K562 (cell line): ENCODE measurements at regions of chr6 and their contacts with region 1.

Region 1: DNA sequence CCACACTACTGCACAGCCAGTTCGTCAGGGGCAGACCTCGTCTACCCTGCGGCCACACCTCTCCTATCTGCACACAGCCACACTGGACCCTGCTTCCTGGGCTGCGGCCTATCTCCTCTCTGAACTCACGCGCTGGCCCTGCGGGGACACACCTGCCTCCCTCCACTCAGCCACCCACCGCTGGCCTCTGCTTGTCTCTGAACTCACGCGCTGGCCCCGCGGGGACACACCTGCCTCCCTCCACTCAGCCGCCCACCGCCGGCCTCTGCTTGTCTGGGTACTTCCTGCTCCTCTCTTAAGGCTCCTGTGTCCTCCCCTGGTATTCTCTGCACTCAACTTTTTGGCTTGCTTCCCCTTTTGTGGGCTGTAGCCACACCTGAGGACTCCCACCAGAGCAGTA is 52.3 kb downstream of the HUS1B start:
- DNase-seq: peak; percentile 64 to 91 (median 77)
- ATAC-seq: peak; percentile 98
- H3K4me3 ChIP-seq: no peak overlapping the region
- H3K27ac ChIP-seq: peak overlapping the region; percentile 14; the same call in 1 of the 3 replicates
- H3K4me1 ChIP-seq: peaks cover 15 to 27% of the 10 kb centered on the region in 2 experiments; a peak in 4 of 5 replicates
- H3K27me3 ChIP-seq: no peaks in the 10 kb centered on the region
- CTCF ChIP-seq: no peak
- EP300 ChIP-seq: peak; percentile 57; the same call in 1 of the 2 replicates
- POLR2A ChIP-seq: no peak
- RAD21 ChIP-seq: no peak

Region 2: GRCh38 chr6:328136-328670 is 276.4 kb before region 1 on chr6:
- CTCF ChIA-PET with region 1: no interaction called
- POLR2A ChIA-PET with region 1: no interaction called
- in situ Hi-C with region 1: no loop called
- intact Hi-C with region 1: no loop called
- DNase-seq: no peak
- ATAC-seq: peak; percentile 31; the same call in 1 of the 3 replicates
- H3K4me3 ChIP-seq: no peak overlapping the region
- H3K27ac ChIP-seq: no peak overlapping the region
- H3K4me1 ChIP-seq: peaks cover 4 to 5% of the 10 kb centered on the region in 2 experiments; a peak in 3 of 5 replicates
- H3K27me3 ChIP-seq: peaks cover 6 to 35% of the 10 kb centered on the region in 2 experiments; a peak in 3 of 5 replicates
- CTCF ChIP-seq: no peak
- EP300 ChIP-seq: no peak
- POLR2A ChIP-seq: no peak
- RAD21 ChIP-seq: no peak

Region 3: DNA sequence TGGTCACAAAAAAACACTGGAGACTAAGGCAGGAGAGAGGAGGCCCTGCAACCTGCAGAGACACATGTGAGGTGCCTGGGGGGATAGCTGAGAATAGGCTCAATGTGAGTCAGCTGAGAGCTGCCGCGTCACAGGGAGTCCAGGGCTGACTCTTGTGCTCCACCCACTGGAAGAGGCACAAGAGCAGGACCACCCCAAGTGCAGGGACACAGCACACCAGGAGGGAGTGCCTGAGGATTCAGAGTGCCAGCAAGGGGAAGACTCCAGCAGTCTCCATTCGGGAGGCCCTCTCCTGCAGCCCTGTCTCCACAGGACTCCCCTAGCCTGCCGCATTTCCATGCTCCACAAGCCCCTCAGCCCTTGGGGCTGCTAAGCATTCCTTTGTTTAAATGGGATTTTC is 53.2 kb before region 1 on chr6:
- CTCF ChIA-PET with region 1: no interaction called
- POLR2A ChIA-PET with region 1: no interaction called
- in situ Hi-C with region 1: no loop called
- intact Hi-C with region 1: no loop called
- DNase-seq: peak in 2 of 4 experiments; percentile 58 to 60
- ATAC-seq: peak; percentile 97
- H3K4me3 ChIP-seq: no peak overlapping the region
- H3K27ac ChIP-seq: no peak overlapping the region
- H3K4me1 ChIP-seq: no peaks in the 10 kb centered on the region; a peak in 1 of 5 replicates
- H3K27me3 ChIP-seq: no peaks in the 10 kb centered on the region
- CTCF ChIP-seq: peak; percentile 45 to 68 (median 56)
- EP300 ChIP-seq: no peak
- POLR2A ChIP-seq: no peak
- RAD21 ChIP-seq: peak; percentile 6 to 61; a peak in 2 of 4 replicates

Region 4: DNA sequence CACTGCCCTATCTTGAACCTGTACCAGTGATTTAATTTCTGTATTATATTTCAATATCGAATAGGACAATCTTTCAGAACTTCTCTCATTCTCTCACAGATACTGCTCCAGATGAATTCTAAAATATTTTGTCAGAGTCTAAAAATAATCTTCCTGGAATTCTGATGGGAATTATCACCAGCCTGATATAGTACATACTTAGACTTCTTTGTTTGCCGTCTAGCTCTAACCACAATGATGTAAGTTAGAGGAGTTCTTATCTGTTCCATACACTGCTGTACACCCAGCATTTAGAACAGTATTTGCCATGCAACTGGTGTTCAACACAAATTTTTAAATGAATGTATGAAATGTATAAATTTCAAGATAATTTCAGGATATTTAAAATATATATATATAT is 53.7 kb after region 1 on chr6:
- CTCF ChIA-PET with region 1: no interaction called
- POLR2A ChIA-PET with region 1: no interaction called
- in situ Hi-C with region 1: no loop called
- intact Hi-C with region 1: loop called (anchors 2 kb)
- DNase-seq: peak; percentile 30 to 72 (median 50)
- ATAC-seq: peak; percentile 89
- H3K4me3 ChIP-seq: no peak overlapping the region
- H3K27ac ChIP-seq: no peak overlapping the region; the same call in 2 of the 3 replicates
- H3K4me1 ChIP-seq: peaks cover 23 to 25% of the 10 kb centered on the region in 2 experiments
- H3K27me3 ChIP-seq: no peaks in the 10 kb centered on the region
- CTCF ChIP-seq: no peak
- EP300 ChIP-seq: peak; percentile 74; the same call in 1 of the 2 replicates
- POLR2A ChIP-seq: no peak
- RAD21 ChIP-seq: no peak

Region 5: GRCh38 chr6:683742-684440 is 79.3 kb after region 1 on chr6:
- CTCF ChIA-PET with region 1: no interaction called
- POLR2A ChIA-PET with region 1: no interaction called
- in situ Hi-C with region 1: no loop called
- intact Hi-C with region 1: loop called (anchors 2 kb)
- DNase-seq: peak; percentile 74 to 80 (median 77)
- ATAC-seq: peak; percentile 80
- H3K4me3 ChIP-seq: no peak overlapping the region
- H3K27ac ChIP-seq: no peak overlapping the region
- H3K4me1 ChIP-seq: peaks cover 4 to 21% of the 10 kb centered on the region in 2 experiments; a peak in 4 of 5 replicates
- H3K27me3 ChIP-seq: no peaks in the 10 kb centered on the region
- CTCF ChIP-seq: no peak
- EP300 ChIP-seq: 0 out of 2 replicates have a peak, but pooled peaks have one; percentile 37
- POLR2A ChIP-seq: no peak
- RAD21 ChIP-seq: 0 out of 4 replicates have a peak, but pooled peaks of 1 of the 2 experiments have one; percentile 3